Activated CD8-positive, alpha-beta memory T cell treated with anti-CD3 and anti-CD28 coated beads, Interleukin-2, amount 10 ng/mL, durations not matched to agents 7 days and 5 days (primary cell): ENCODE measurements at regions of chr20 and their contacts with region 1.

Region 1: DNA sequence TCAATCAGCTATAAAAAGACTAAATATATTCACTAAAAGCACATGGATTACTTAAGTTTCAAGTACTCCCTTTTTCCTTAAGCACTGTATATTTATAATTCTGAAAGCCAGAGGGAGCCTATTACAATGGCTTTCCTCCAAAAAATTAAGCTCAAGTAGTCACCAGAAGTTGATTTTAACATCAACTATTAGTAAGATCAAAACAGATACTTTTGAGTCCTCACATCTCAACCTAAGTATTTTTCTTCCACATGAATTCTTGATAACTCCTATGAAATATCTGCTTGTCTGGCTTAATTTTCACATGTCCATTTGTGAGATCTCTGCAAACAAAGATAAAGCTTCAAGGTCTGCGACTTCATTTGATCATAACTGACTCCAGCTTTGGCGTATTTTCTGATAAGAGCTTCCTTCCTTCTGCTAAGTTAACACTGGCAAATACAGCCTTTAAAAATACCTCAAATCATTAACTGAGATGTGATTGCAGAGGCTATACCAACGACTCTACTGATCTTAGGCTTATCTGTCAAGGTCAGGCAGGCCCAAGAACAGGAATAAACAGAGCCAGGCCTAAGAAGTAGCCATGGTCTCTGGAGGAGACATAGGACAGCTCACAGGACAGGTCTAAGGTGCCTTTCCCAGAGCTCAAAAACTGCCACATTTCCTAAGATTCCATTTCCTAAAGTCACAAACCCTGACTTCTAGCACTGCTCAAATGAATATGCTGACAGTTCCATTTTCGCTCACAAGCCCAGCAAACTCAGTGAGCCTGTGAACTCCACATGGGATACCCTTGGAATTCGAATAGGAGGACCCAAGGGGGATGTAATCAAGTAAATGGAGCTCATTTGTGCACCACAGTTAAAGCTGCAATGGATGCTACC is 10.0 kb downstream of the SNX5 start:
- DNase-seq: no peak
- ATAC-seq: no peak
- H3K4me3 Mint-ChIP-seq: peak overlapping the region; percentile 2
- H3K27ac Mint-ChIP-seq: peak overlapping the region; percentile 88
- H3K4me1 Mint-ChIP-seq: peaks cover 91% of the 10 kb centered on the region
- H3K27me3 Mint-ChIP-seq: no peaks in the 10 kb centered on the region

Region 2: DNA sequence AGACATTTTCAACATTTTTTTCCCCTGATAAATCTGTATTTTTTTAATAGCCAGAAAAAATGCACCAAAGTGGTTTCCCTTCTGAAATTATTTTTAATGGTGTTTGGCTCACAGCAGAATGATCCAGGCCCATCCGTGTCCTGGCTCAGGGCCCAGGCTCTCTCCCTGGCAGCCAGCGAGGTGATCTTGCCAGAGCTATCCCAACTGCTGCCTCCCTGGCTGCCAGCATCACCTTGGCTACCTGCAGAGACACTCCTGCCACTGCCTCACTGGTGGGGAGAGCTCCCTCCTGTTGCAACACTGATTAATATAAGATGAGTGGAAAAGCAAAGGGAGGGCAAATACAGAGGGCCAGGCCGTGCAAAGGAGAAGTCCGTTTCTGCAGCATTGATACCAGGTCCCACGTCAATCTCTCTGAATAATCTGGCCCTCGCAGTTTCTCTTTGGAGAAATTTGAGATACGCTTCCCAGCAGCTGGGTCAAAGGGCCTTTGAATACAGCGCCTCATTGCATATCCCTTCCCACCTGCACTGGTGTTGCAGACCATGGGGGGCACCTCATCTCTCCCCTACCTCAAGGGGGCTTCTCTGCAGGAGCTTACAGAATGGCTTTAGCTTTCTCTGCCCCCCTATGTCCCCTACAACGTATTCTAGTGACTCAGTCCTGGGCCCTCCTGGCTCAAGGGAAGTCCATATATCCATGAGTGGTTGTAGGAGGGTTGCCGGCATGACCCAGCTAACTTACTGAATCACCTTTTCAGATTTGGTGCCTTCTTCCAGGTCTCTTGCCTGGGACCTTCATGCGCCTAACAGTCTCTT is 401.6 kb before region 1 on chr20:
- CTCF ChIA-PET with region 1: no interaction called
- DNase-seq: no peak
- ATAC-seq: no peak
- H3K4me3 Mint-ChIP-seq: no peak overlapping the region
- H3K27ac Mint-ChIP-seq: no peak overlapping the region
- H3K4me1 Mint-ChIP-seq: peaks cover 24% of the 10 kb centered on the region
- H3K27me3 Mint-ChIP-seq: peaks cover 3% of the 10 kb centered on the region

Region 3: GRCh38 chr20:17938871-17939619 is 19.6 kb before region 1 on chr20:
- CTCF ChIA-PET with region 1: interaction called, 12 read pairs
- DNase-seq: peak; percentile 80
- ATAC-seq: peak; percentile 92
- H3K4me3 Mint-ChIP-seq: no peak overlapping the region
- H3K27ac Mint-ChIP-seq: peak overlapping the region; percentile 75
- H3K4me1 Mint-ChIP-seq: peaks cover 30% of the 10 kb centered on the region
- H3K27me3 Mint-ChIP-seq: no peaks in the 10 kb centered on the region

Region 4: GRCh38 chr20:17968366-17969279 is 10.0 kb after region 1 on chr20 and contains the starts of genes MGME1 and SNX5:
- CTCF ChIA-PET with region 1: interaction called, 53 read pairs
- DNase-seq: peak; percentile 100
- ATAC-seq: peak; percentile 91
- H3K4me3 Mint-ChIP-seq: peak within 1 kb of the TSS; percentile 87
- H3K27ac Mint-ChIP-seq: peak within 1 kb of the TSS; percentile 97
- H3K4me1 Mint-ChIP-seq: peaks cover 38% of the 10 kb centered on the region
- H3K27me3 Mint-ChIP-seq: no peaks in the 10 kb centered on the region
- total RNA-seq, gene MGME1: 46.6 to 50.7 TPM
- total RNA-seq, gene SNX5: 178 to 192 TPM

Region 5: GRCh38 chr20:17995967-17996819 is 37.6 kb after region 1 on chr20:
- CTCF ChIA-PET with region 1: interaction called, 11 read pairs
- DNase-seq: peak; percentile 59
- ATAC-seq: peak; percentile 52
- H3K4me3 Mint-ChIP-seq: no peak overlapping the region
- H3K27ac Mint-ChIP-seq: no peak overlapping the region
- H3K4me1 Mint-ChIP-seq: peaks cover 40% of the 10 kb centered on the region
- H3K27me3 Mint-ChIP-seq: no peaks in the 10 kb centered on the region

Region 6: GRCh38 chr20:18031050-18031449 is 72.4 kb after region 1 on chr20:
- CTCF ChIA-PET with region 1: no interaction called
- DNase-seq: no peak
- ATAC-seq: no peak
- H3K4me3 Mint-ChIP-seq: no peak overlapping the region
- H3K27ac Mint-ChIP-seq: no peak overlapping the region
- H3K4me1 Mint-ChIP-seq: no peaks in the 10 kb centered on the region
- H3K27me3 Mint-ChIP-seq: peaks cover 8% of the 10 kb centered on the region